ENCODE measurements at regions of chr1 and their contacts with region 1.

Region 1: GRCh38 chr1:218345673-218346390 is 696 bp downstream of the TGFB2 start:
- DNase-seq: no peak
- H3K4me3 ChIP-seq: peak overlapping the region; percentile 69 to 78 (median 74)
- H3K27ac ChIP-seq: peak overlapping the region; percentile 83 to 91 (median 90)
- H3K4me1 ChIP-seq: peaks cover 6 to 44% (median 41%) of the 10 kb centered on the region in 4 donors
- H3K27me3 ChIP-seq: no peaks in the 10 kb centered on the region
- CTCF ChIP-seq: no peak
- EP300 ChIP-seq: no peak
- POLR2A ChIP-seq: no peak

Region 2: GRCh38 chr1:218361298-218362065 is 15.7 kb after region 1 on chr1:
- intact Hi-C with region 1: no loop called
- DNase-seq: no peak
- H3K4me3 ChIP-seq: no peak overlapping the region
- H3K27ac ChIP-seq: peak overlapping the region; percentile 45 to 79 (median 72)
- H3K4me1 ChIP-seq: peaks cover 14 to 66% (median 61%) of the 10 kb centered on the region in 4 donors
- H3K27me3 ChIP-seq: peaks cover 0 to 3% (median 0%) of the 10 kb centered on the region in 4 donors
- CTCF ChIP-seq: peak; percentile 51 to 62 (median 58)
- EP300 ChIP-seq: no peak
- POLR2A ChIP-seq: no peak

Region 3: DNA sequence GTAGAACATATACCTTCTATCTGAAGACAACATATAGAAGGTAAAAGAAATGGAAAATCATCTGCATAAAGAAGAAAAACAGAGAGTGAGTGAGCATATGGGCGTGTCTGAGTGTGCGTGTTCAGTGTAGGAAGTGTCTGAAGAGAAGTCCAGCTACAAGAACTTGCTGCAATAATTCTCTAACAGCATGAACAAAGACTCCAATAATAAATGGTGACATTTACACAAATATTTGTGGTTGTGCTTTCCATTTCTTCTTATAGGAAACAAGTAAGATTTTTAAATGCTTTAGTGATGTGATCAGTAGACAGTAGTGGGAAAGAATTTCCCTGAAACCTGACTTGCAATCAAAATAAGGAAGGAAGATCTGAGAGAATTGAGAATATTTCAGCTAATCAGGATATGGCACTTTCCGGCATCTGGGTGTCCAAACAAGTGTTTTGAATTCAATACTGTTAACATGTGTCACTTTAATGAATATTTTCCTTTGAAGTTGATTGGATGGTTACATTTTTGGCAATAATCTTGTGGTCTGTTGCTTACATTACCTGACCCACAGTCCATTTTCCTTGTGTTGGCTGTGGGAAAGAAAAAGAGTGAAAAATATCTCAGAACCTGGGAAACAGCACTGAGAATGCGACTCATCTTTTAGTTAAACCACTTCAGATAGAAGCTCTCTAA is 153.3 kb after region 1 on chr1:
- intact Hi-C with region 1: loop called (anchors 10 kb)
- DNase-seq: no peak
- H3K4me3 ChIP-seq: peak overlapping the region; percentile 39 to 49 (median 48)
- H3K27ac ChIP-seq: peak overlapping the region; percentile 70 to 78 (median 74)
- H3K4me1 ChIP-seq: peaks cover 10 to 57% (median 34%) of the 10 kb centered on the region in 4 donors
- H3K27me3 ChIP-seq: no peaks in the 10 kb centered on the region
- CTCF ChIP-seq: no peak
- EP300 ChIP-seq: no peak
- POLR2A ChIP-seq: no peak

Region 4: GRCh38 chr1:218521375-218522169 is 175.7 kb after region 1 on chr1:
- intact Hi-C with region 1: loop called (anchors 5 kb)
- DNase-seq: no peak
- H3K4me3 ChIP-seq: no peak overlapping the region
- H3K27ac ChIP-seq: no peak overlapping the region
- H3K4me1 ChIP-seq: peaks cover 0 to 6% (median 0%) of the 10 kb centered on the region in 4 donors
- H3K27me3 ChIP-seq: no peaks in the 10 kb centered on the region
- CTCF ChIP-seq: peak; percentile 67 to 75 (median 68)
- EP300 ChIP-seq: no peak
- POLR2A ChIP-seq: no peak

Region 5: DNA sequence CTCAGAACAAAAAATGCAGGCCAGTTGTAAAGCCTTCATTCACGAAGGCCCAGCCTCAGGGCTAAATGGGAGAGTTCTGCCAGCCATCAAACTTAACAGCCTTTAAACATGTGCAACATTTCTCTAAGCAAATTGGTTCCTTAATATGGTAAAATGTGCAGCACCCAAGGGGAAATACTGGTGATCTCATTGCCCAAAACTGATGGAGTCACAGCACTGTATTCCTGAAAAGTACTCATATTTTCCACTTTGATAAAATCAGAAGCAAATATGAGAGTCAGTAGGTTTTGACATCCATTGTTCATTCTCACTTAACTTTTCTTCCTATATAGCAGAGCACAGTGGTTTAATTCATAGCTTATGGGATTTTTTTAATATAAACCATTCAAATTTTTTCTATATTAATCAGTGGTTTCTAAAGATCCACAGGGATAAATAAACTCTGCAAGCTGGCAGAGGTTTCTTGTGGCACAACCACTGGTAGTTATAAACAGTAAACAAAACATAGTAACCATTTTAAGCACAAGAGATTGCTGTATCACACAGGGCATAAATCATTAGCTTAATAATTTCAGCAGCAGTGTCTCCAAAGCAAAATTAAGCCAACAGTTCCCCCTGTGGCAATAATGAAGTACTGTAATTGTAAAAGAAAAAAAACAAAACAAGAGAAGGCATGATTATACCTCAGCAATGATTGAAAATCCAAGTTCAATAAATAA is 721.0 kb after region 1 on chr1:
- intact Hi-C with region 1: loop called (anchors 10 kb)
- DNase-seq: no peak
- H3K4me3 ChIP-seq: no peak overlapping the region
- H3K27ac ChIP-seq: no peak overlapping the region
- H3K4me1 ChIP-seq: peaks cover 0 to 15% (median 9%) of the 10 kb centered on the region in 4 donors
- H3K27me3 ChIP-seq: no peaks in the 10 kb centered on the region
- CTCF ChIP-seq: peak; percentile 16 to 50 (median 47)
- EP300 ChIP-seq: no peak
- POLR2A ChIP-seq: no peak

Region 6: DNA sequence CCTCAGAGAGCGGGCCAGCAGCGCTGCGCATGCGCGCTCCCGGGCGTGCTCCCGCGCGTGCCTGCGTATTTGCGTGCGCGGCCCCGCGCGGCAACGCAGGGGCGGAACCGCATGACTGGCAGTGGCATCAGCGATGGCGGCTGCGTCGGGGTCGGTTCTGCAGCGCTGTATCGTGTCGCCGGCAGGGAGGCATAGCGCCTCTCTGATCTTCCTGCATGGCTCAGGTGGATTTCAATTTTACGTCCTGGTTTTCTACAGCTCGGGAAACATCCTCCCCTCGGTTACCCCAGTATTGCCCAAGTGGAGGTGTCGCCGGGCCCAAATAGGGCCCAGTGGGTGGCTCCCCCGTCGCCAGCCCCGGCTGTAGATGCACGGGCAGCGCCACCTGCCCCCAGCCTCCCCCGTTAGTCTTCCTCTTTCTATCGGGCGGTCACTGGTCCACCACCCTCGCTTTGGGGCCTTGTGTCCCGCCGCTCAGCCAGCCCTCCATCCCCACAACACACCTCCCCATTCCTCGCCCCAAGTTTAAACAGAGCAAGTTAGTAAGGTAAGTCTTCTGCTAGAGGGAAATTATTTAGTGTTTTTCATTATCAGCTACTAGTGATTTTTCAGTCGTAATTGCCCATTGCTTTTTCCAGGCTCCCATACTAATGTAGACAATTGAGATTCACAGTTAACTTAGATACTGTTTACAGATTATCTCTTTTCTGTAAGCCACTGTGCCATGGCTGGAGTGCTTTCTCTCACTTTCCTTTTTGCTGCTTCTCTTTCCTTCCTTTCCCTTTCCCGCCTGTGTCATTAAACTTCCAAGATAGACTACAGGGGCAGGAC is 828.1 kb after region 1 on chr1 and contains the start of gene LYPLAL1:
- intact Hi-C with region 1: loop called (anchors 10 kb)
- DNase-seq: peak; percentile 94
- H3K4me3 ChIP-seq: peak within 1 kb of the TSS; percentile 66 to 82 (median 69)
- H3K27ac ChIP-seq: peak within 1 kb of the TSS; percentile 87 to 92 (median 90)
- H3K4me1 ChIP-seq: peaks cover 17 to 42% (median 30%) of the 10 kb centered on the region in 4 donors
- H3K27me3 ChIP-seq: no peaks in the 10 kb centered on the region
- CTCF ChIP-seq: peak in 1 of 3 experiments; percentile 19
- EP300 ChIP-seq: no peak
- POLR2A ChIP-seq: peak; percentile 87
- total RNA-seq, gene LYPLAL1: 13.8 to 21.6 (median 16.9) TPM